Caco-2 (cell line): ENCODE measurements at regions of chr10 and their contacts with region 1.

Region 1: DNA sequence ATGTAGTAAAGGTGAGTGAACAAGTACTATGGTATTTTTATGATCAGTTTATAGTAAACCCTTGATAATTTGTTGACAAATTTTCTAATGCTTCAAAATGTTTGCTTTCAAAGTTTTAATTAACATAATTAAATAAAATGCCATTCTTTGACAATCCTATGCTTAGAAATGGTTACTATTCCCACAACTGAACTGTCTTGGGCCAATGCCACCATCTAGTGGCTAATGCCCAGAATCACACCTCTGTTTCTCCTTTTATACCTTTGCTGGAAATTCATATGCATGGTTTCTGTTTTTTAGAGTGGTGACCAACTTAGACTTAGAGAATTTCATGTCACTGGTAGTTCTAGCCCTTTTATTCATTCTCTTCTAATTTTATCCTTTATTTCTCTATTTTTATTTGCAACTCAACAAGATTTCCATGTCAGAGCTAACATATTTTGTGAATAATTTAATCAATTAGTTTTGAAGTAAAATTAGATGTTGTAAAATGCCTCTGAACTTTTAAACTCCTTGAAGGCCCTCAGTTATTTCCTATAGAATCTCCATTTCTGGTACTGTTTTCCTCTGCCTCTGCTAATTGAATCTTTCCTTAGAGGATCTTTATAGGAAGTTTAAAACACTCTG is 31.1 kb downstream of the PCGF5 start:
- DNase-seq: peak; percentile 37 to 53
- H3K4me3 ChIP-seq: no peak overlapping the region
- H3K4me3 Mint-ChIP-seq: no peak overlapping the region
- H3K27ac Mint-ChIP-seq: no peak overlapping the region
- H3K4me1 ChIP-seq: no peaks in the 10 kb centered on the region
- H3K4me1 Mint-ChIP-seq: no peaks in the 10 kb centered on the region
- H3K27me3 ChIP-seq: no peaks in the 10 kb centered on the region
- H3K27me3 Mint-ChIP-seq: peaks cover 3% of the 10 kb centered on the region
- CTCF ChIP-seq: peak; percentile 86 to 93

Region 2: GRCh38 chr10:90885176-90885575 is 366.4 kb before region 1 on chr10:
- CTCF ChIA-PET with region 1: no interaction called
- POLR2A ChIA-PET with region 1: no interaction called
- intact Hi-C with region 1: loop called (anchors 1 kb)
- DNase-seq: no peak
- H3K4me3 ChIP-seq: no peak overlapping the region
- H3K4me3 Mint-ChIP-seq: no peak overlapping the region
- H3K27ac Mint-ChIP-seq: no peak overlapping the region
- H3K4me1 ChIP-seq: no peaks in the 10 kb centered on the region
- H3K4me1 Mint-ChIP-seq: no peaks in the 10 kb centered on the region
- H3K27me3 ChIP-seq: no peaks in the 10 kb centered on the region
- H3K27me3 Mint-ChIP-seq: no peaks in the 10 kb centered on the region
- CTCF ChIP-seq: no peak

Region 3: DNA sequence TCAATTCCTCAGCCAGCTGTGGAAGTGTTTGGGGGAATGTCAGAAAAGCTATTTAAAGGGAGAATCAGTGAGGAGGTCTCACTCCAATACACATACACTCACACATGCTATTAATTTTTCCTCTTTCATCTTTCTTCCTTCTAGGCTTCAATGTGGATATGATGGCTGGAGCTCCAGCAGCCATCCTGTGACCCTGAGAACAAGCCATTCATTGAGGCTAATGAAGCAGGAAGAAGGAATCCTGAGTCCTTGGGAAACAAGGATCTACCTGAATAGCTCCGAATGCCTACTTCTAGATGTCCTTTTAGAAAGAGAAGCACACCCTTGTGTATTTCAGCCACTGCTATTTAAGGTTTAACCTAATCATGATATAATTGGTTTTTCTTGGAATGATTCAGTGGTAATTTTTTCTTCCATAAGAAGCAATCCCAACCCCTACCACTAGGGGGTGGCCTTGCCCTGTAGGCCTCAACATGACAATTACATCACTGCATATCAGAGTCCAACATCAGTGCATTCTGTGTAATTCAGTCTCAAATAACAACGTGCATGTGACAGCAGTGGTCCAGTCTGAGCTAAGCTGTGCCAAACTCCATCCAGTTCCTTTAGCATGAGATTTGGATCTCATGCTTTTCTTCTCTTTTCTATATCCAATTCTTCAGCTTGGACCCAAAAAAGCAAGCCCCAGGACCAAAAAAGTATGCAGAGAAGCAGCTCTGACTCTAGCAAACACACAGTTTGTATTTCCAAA is 245.4 kb before region 1 on chr10:
- CTCF ChIA-PET with region 1: interaction called, 7 read pairs
- POLR2A ChIA-PET with region 1: no interaction called
- intact Hi-C with region 1: loop called (anchors 1 kb)
- DNase-seq: peak in 1 of 2 experiments; percentile 74
- H3K4me3 ChIP-seq: no peak overlapping the region
- H3K4me3 Mint-ChIP-seq: no peak overlapping the region
- H3K27ac Mint-ChIP-seq: no peak overlapping the region
- H3K4me1 ChIP-seq: peaks cover 5% of the 10 kb centered on the region; the same call in 1 of the 2 replicates
- H3K4me1 Mint-ChIP-seq: peaks cover 8% of the 10 kb centered on the region
- H3K27me3 ChIP-seq: no peaks in the 10 kb centered on the region
- H3K27me3 Mint-ChIP-seq: no peaks in the 10 kb centered on the region
- CTCF ChIP-seq: peak; percentile 82 to 93

Region 4: DNA sequence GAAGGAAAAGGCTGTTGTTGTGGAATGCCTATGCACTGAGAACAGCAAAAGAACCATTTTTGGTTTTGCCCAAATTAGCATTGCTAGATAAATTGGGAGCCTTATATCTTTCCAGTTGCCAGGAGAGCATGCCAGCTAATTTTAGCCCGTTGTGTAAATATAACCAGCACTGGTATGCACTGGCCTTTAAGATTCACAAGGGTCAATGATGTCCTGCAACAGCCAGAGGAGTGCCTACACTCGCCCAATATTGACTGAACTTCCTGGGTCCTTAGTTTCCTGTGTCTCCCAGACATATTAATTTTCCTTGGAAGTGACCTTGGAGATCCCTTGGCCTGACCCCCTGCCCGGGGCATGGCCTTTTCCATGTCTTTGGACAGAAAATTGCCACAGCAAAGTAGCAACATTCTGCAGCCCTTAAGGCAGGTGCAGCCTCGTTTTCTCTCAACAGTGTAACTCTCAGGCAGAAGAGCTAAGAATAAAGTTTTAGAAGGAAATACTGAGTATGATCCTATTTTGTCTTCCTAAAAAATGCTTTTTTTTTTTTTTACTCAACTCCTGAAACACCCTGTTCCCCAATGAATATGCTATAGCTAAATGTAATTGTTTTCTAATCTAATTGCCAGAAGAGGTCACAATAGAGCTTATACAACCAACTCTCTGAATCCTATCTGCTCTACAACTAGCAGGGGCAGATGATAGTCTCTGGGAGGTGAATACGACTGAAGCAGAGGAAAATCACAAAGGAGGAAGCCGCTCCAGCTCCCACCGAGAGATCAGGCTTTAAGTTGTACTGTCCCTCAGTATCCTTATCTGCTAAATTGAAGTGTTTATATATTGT is 163.0 kb before region 1 on chr10:
- CTCF ChIA-PET with region 1: interaction called, 9 read pairs
- POLR2A ChIA-PET with region 1: no interaction called
- intact Hi-C with region 1: loop called (anchors 1 kb)
- DNase-seq: peak in 1 of 2 experiments; percentile 5
- H3K4me3 ChIP-seq: no peak overlapping the region
- H3K4me3 Mint-ChIP-seq: no peak overlapping the region
- H3K27ac Mint-ChIP-seq: no peak overlapping the region
- H3K4me1 ChIP-seq: no peaks in the 10 kb centered on the region
- H3K4me1 Mint-ChIP-seq: no peaks in the 10 kb centered on the region
- H3K27me3 ChIP-seq: no peaks in the 10 kb centered on the region
- H3K27me3 Mint-ChIP-seq: peaks cover 15% of the 10 kb centered on the region
- CTCF ChIP-seq: peak in 1 of 2 experiments; percentile 18

Region 5: GRCh38 chr10:91163269-91163868 is 88.2 kb before region 1 on chr10:
- CTCF ChIA-PET with region 1: no interaction called
- POLR2A ChIA-PET with region 1: no interaction called
- intact Hi-C with region 1: no loop called
- DNase-seq: peak; percentile 43 to 50
- H3K4me3 ChIP-seq: peak overlapping the region; percentile 70
- H3K4me3 Mint-ChIP-seq: peak overlapping the region; percentile 70
- H3K27ac Mint-ChIP-seq: no peak overlapping the region
- H3K4me1 ChIP-seq: no peaks in the 10 kb centered on the region
- H3K4me1 Mint-ChIP-seq: peaks cover 7% of the 10 kb centered on the region
- H3K27me3 ChIP-seq: peaks cover 10% of the 10 kb centered on the region
- H3K27me3 Mint-ChIP-seq: peaks cover 38% of the 10 kb centered on the region
- CTCF ChIP-seq: no peak

Region 6: GRCh38 chr10:91290607-91291006 is 39.1 kb after region 1 on chr10:
- CTCF ChIA-PET with region 1: no interaction called
- POLR2A ChIA-PET with region 1: no interaction called
- intact Hi-C with region 1: loop called (anchors 1 kb)
- DNase-seq: no peak
- H3K4me3 ChIP-seq: no peak overlapping the region
- H3K4me3 Mint-ChIP-seq: no peak overlapping the region
- H3K27ac Mint-ChIP-seq: no peak overlapping the region
- H3K4me1 ChIP-seq: no peaks in the 10 kb centered on the region
- H3K4me1 Mint-ChIP-seq: no peaks in the 10 kb centered on the region
- H3K27me3 ChIP-seq: no peaks in the 10 kb centered on the region; the same call in none of the 2 replicates
- H3K27me3 Mint-ChIP-seq: peaks cover 21% of the 10 kb centered on the region
- CTCF ChIP-seq: no peak

Region 7: DNA sequence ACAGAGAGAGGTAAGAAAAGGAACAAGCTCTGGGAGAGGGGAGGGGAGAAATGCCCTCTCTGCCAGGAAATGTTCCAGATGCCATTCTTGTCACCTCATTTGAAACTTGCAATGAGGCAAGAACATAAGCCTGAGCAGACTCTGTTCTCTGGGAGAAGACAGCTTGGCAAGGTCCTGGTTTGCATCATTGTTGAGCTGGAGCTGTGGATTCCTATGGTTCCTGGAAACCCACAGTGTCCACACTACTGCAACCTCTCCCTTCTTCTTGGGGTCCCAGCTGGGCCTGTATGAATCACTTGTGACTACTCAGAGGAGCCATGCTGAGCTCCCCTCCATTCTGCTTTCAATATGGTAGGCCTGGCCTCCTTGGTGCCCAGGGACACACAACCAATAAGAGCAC is 97.8 kb after region 1 on chr10:
- CTCF ChIA-PET with region 1: no interaction called
- POLR2A ChIA-PET with region 1: no interaction called
- intact Hi-C with region 1: no loop called
- DNase-seq: no peak
- H3K4me3 ChIP-seq: no peak overlapping the region
- H3K4me3 Mint-ChIP-seq: no peak overlapping the region
- H3K27ac Mint-ChIP-seq: no peak overlapping the region
- H3K4me1 ChIP-seq: no peaks in the 10 kb centered on the region
- H3K4me1 Mint-ChIP-seq: no peaks in the 10 kb centered on the region
- H3K27me3 ChIP-seq: no peaks in the 10 kb centered on the region
- H3K27me3 Mint-ChIP-seq: peaks cover 12% of the 10 kb centered on the region
- CTCF ChIP-seq: no peak